Ascending aorta (tissue), 2 donors: ENCODE measurements at regions of chr1 and their contacts with region 1.

Region 1: DNA sequence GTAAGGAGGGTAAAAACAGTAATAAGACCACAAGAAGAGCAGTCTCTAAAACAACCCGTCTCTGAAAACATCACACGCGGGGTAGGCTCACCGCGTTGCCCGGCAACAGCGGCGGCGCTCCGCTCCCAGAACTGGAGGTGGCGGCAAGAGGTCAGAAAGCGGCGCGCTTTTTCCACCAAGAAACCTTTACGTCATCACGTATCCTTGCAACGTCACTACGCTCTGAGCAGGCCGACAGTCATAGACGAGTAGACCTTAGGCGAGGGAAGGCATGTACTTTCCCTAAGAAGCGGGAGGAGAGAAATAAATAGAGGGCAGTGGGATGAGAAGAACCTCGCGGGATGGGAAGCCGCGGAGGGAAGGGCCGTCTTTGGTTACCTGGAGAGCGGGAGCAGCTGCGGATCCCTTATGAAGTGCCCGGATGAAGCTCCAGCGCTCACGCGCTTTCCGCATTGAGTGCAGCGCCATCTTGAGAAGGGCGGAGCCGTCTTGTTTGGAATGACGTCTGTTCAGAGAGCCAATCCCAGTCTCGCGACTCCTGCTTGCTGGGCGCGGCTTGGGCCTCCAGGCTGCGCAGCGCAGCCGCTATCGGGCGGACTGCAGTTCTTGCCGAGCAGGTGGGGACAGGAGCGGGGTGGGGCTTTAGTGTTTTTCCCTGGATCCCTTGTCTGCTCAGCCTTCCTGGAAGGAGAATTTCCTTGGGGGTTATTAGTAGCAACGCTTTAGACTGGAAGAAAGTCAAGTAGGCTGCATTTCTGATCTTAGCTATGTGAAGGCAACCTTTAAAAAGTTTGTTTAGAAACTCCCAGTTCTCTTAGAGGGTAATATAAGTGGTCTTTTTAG is at the start of gene WARS2:
- DNase-seq: peak; percentile 84 to 97
- H3K4me3 ChIP-seq: peak within 1 kb of the TSS; percentile 69 to 74
- H3K27ac ChIP-seq: peak within 1 kb of the TSS; percentile 95 to 98
- H3K4me1 ChIP-seq: peaks cover 4% of the 10 kb centered on the region in 2 donors
- H3K27me3 ChIP-seq: no peaks in the 10 kb centered on the region
- CTCF ChIP-seq: peak in 1 of 3 experiments; percentile 13
- total RNA-seq, gene WARS2: 11.9 TPM

Region 2: DNA sequence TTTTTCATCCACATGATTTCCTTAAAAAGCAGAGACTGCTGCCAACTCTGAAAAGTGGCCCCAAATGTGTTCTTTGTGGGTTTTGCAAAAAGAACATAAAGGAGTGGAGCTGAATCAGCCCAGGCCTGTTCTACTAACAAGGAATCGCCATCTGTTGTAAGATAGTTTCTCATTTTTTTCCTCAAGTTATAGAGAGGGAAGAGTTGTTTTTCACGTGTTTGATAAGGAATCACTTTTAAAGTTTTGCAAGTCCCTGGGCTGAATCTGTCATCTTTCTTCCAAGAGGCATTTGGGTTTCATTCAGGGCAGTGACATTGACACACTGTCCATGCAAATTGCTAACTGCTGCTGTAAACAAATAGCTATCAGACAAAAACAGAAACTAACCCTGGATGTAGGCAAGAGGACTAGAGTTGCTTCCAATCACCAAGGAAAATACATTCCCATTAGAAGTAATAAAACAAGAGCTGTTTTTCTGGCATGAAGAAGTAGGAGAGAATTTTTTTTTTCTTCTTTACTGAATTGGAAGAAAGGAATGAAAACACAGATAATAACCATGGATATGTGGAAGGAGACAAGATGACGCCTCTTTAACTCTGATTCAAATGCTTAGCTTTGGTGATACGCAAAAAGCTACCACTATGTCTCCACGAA is 93.5 kb before region 1 on chr1:
- intact Hi-C with region 1: loop called (anchors 5 kb)
- DNase-seq: no peak
- H3K4me3 ChIP-seq: peak overlapping the region in 1 of 2 donors; percentile 29
- H3K27ac ChIP-seq: peak overlapping the region; percentile 28 to 42
- H3K4me1 ChIP-seq: no peaks in the 10 kb centered on the region
- H3K27me3 ChIP-seq: no peaks in the 10 kb centered on the region
- CTCF ChIP-seq: no peak